ENCODE measurements at regions of chr15 and their contacts with region 1.

Region 1: GRCh38 chr15:76223521-76223920 is 87.7 kb downstream of the ETFA start:
- DNase-seq: no peak
- H3K4me3 ChIP-seq: no peak overlapping the region
- H3K27ac ChIP-seq: no peak overlapping the region
- H3K4me1 ChIP-seq: no peaks in the 10 kb centered on the region
- H3K27me3 ChIP-seq: no peaks in the 10 kb centered on the region
- CTCF ChIP-seq: no peak
- EP300 ChIP-seq: no peak
- POLR2A ChIP-seq: no peak

Region 2: DNA sequence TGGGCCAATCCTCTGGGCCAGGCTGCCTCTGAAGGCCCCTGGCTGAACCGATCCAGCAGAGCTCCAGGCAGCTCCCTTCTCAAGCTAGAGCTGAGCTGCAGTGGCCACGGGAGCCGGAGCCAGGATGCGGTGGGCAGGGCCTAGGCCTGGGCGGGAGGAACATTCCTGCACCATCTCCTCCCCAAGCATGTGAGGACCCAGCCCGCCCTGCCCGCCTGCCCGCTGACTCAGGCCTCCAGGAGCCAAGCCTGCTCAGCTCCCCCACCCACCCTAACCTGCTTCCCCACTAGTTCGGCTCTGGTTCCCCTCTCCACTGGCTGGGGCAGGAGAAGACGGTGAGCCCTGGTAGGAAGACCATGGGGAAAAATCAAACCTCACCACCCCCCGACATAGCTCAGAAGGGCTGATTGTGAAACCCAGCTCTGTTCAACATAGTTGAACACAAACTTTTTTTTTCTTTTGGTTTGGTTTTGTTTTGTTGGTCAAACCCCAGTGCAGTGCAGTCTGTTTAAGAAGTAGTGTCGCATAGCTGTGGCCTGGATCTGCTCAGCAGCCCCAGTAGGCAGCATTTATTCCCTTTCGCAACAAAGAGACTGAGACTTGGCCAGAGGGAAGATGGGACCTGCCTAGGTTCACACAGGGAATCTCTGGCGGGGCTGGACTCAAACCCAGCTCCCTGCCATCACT is 562.3 kb before region 1 on chr15:
- intact Hi-C with region 1: no loop called
- DNase-seq: peak; percentile 86 to 93 (median 89)
- H3K4me3 ChIP-seq: no peak overlapping the region
- H3K27ac ChIP-seq: peak overlapping the region; percentile 76 to 82
- H3K4me1 ChIP-seq: peaks cover 12% of the 10 kb centered on the region
- H3K27me3 ChIP-seq: no peaks in the 10 kb centered on the region
- CTCF ChIP-seq: no peak
- EP300 ChIP-seq: no peak
- POLR2A ChIP-seq: no peak

Region 3: DNA sequence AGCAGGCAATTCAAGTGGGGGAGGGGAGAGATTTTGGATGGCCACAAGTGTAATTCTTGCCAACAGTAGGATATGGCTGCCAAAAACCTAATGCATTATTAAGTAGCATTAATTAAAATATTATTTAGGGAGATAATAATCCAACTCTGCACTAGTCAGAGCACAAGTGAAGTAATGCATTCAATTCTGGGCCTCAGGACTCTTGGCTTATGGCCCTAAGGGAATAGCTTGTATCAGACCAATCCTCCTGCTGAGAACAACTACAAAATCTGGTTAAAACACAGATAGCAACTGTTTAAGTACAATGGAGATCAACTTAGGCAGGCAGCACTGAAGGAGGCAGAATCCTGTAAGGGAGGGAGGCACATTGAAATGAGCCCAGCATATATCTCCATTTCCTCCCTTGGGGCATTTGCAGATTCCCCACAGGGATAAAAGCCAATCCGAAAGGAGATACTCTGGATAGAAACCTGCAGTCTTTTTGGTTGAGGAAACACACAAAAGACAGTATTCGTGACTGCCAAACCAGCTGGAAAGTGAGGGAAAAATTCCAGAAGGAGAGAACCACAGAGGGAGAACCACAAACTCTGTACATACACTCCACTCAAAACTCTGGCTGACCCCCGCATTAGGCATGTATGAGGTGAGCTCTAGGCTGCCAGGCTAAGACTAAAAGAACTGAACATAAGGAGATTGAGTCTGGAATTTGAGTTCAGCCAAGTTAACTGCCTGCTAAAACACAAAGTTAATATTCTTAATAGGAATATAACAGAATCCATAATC is 30.4 kb after region 1 on chr15:
- intact Hi-C with region 1: loop called in 1 of 4 experiments (anchors 1 kb)
- DNase-seq: no peak
- H3K4me3 ChIP-seq: no peak overlapping the region
- H3K27ac ChIP-seq: no peak overlapping the region
- H3K4me1 ChIP-seq: no peaks in the 10 kb centered on the region
- H3K27me3 ChIP-seq: no peaks in the 10 kb centered on the region
- CTCF ChIP-seq: no peak
- EP300 ChIP-seq: no peak
- POLR2A ChIP-seq: no peak

Region 4: DNA sequence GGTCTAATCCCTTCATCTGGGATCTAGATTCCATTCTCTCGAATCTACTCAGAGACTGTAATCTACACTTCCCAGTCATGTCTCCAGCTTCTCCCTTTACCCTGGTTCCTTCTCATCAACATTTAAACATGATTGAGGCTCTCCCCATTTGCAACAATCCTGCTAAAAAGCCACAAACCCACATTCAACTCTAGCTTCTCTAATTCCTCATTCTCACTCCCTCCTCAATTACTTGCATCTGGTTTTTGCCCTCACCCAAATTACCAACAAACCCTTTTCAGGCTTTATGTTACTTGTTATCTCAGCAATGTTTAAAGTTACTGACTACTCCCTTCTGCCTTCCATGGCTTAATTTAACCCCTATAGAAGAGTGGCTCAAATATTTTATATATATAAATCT is 76.3 kb after region 1 on chr15:
- intact Hi-C with region 1: loop called in 1 of 4 experiments (anchors 2 kb)
- DNase-seq: no peak
- H3K4me3 ChIP-seq: no peak overlapping the region
- H3K27ac ChIP-seq: no peak overlapping the region
- H3K4me1 ChIP-seq: peaks cover 3% of the 10 kb centered on the region
- H3K27me3 ChIP-seq: no peaks in the 10 kb centered on the region
- CTCF ChIP-seq: no peak
- EP300 ChIP-seq: no peak
- POLR2A ChIP-seq: no peak

Region 5: DNA sequence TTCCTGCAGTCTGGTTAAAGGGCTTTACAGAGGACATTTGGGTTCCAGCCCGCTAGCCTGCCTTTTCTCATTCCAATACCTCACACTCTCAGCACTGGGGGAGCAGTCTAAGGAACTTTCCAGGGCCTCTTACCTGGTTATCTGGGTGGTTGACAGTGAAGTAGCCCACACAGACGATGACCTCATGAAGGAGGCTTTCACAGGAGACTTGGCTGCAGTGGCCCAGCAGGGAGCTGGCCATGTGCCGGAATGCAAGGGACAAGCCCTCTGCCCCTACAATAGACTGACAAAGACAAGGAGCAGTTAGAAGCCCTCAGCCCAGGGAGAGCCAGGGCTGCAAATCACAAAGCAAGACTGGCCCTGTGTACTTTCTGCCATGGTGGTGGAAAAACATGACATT is 152.5 kb after region 1 on chr15:
- intact Hi-C with region 1: no loop called
- DNase-seq: no peak
- H3K4me3 ChIP-seq: no peak overlapping the region
- H3K27ac ChIP-seq: no peak overlapping the region
- H3K4me1 ChIP-seq: no peaks in the 10 kb centered on the region
- H3K27me3 ChIP-seq: no peaks in the 10 kb centered on the region
- CTCF ChIP-seq: no peak
- EP300 ChIP-seq: no peak
- POLR2A ChIP-seq: no peak

Region 6: DNA sequence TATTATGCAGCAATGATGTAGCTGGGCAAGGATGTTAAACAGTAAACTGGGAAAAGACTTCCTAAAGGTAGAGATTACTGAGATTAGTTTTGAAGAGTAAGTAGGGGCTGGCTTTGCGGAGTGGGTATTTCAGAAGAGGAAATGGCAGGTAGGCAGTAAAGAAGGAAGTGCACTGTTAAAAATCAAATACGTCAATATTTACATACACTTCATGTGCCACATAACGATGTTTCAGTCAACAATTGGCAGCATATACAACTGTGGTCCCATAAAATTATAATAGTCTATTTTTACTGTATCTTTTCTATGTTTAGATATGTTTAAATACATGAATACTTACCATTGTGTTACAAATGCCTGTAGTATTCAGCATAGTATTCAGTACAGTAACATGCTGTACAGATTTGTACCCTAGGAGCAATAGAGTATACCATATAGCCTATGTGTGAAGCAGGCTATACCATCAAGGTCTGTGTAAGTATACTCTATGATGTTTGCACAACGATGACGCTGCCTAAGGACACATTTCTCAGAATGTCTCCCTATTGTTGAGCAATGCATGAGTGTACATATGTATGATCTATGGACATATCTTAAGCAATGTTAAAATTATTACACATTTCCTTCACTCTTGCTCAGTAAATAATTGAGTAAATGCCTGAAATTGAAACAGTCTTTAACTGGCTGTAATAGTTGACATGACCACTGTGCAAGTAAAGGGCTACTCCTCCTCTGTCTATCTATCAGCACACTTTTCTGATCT is 309.7 kb after region 1 on chr15:
- intact Hi-C with region 1: no loop called
- DNase-seq: no peak
- H3K4me3 ChIP-seq: no peak overlapping the region
- H3K27ac ChIP-seq: no peak overlapping the region
- H3K4me1 ChIP-seq: no peaks in the 10 kb centered on the region
- H3K27me3 ChIP-seq: no peaks in the 10 kb centered on the region
- CTCF ChIP-seq: no peak
- EP300 ChIP-seq: no peak
- POLR2A ChIP-seq: no peak

Measured in ovary (tissue), 10 donors.